ENCODE measurements at regions of chr9 and their contacts with region 1.

Region 1: DNA sequence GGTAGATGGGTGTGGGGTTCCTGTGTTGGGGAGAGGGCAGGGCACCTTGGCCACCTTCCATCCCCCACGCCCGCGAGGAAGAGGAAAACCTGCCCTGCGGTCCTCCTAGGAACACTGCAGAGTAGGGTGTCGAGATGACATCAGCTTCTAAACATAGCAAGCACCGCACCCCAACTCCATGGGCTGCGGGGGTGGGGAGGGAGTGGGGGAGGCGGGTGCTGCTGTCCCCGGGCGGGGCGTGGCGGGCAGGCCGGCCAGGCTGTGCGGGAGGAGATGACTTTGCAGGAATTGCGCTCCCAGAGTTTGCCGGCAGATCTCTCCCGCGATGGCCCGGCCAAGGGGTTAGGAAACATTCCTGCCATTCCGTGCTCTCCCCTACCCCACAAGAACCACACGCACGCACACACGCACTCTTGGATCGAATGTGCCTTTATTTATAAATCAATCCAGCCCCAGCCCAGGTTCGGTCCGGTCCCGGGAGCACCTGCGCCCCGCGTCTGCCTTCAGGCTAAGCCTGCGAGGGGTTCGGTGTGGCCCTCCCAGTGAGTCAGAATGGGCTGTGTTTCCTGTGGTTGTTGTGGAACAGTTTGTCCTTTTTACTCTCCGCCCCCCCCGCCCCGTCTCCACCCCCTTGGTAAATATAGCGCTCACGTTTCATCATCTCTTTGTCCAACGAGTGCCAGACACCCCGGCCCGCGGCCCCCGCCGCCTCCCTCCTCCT is 5.2 kb upstream of the KLF9 start:
- DNase-seq: peak; percentile 95

Region 2: DNA sequence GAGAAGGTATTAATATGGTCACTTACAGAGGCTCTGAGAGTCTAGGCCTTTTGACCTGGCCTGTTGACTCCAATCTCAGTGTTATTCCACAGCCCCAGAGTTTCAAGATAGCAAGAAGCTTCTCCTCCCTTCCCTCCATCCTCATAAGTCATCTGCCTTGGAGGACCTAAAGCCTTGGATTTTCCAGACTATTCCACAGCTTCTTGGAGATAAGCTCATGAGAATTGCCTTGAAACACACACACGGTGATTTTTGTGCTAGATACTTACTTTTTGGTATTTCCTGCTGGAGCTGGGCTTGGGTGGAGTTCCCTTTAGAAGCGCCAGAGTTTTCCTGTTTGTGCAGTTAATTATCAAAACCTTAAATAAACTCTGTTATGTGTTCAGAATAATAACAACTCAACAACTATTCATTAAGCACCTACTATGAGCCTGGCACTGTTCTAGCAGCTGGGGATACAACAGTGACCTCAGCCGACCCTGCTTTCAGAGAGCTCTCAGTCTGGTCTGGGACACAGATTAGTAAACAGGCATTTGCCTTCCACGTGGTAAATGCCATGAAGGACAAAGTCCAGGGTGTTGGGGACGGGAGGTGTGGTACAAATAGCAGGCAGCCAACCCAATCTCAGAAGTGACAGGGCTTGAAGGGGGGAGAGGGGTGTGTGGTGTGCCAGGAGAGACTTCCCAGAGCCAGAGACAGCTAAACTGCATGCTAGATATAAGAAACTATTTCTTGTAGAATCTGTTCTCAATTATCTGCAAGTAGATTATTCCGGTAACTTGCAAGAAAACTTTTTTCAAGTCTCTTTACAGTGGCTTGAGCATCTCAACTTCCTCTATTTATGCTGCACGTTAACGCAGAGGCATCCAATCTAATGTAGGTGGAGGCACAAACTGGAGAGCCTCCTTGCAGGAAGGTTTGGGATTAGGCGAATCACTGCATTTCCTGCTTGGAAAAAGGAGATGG is 50.6 kb after region 1 on chr9:
- intact Hi-C with region 1: loop called (anchors 1 kb)
- DNase-seq: peak; percentile 77

Region 3: DNA sequence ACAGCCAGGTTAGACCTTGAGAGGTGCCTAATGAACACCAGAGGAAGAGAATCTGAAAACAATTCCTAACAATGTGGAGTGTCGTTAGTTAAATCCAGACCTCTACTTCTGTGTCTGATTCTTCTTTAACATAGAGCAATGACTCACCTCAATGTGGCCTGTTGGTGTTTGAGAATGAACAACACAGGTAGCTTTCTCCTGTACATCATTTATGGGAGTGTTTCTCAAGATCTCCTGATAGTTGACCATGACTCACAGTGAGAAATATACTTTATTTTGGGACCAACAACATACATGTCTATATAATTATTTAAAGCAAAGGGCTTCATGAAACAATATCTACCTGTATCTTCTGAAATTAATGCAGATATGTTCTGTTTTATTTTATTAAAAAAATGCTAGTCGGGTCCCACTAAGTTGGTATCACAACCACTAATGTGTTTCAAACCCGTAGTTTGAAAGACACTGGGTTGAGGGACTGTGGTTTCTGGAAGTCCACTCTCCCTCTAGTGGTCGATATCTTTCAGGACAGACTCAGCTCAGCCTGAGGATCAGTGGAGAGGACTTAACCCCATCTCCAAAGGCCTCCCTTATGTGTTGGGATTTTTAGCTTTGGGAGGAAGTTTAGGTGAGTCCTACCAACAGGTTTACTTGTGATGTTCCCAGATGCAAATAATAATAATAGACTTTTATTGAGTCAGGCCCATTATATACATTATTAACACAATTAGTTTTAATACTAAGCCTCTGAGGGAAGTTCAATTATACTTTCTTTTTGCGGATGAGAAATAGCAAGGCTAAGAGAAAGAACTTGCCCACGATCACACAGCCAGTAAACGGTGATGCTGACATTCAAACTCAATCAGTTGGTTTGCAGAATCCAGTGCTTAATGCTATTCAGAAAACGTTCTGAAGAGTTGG is 64.8 kb after region 1 on chr9:
- intact Hi-C with region 1: loop called (anchors 1 kb)
- DNase-seq: no peak

Region 4: GRCh38 chr9:70587201-70587600 is 167.5 kb after region 1 on chr9:
- intact Hi-C with region 1: loop called (anchors 2 kb)
- DNase-seq: no peak